ENCODE measurements at regions of chr19 and their contacts with region 1.

Region 1: GRCh38 chr19:47778089-47778953 is at the start of gene SELENOW:
- DNase-seq: peak; percentile 80 to 88 (median 87)
- H3K4me3 ChIP-seq: peak within 1 kb of the TSS; percentile 94
- H3K27ac ChIP-seq: peak within 1 kb of the TSS; percentile 88 to 98
- H3K4me1 ChIP-seq: peaks cover 13% of the 10 kb centered on the region
- H3K27me3 ChIP-seq: no peaks in the 10 kb centered on the region
- CTCF ChIP-seq: peak in 1 of 3 donors; percentile 37
- EP300 ChIP-seq: no peak
- POLR2A ChIP-seq: peak; percentile 92
- total RNA-seq, gene SELENOW: 169 to 412 (median 211) TPM

Region 2: GRCh38 chr19:47523473-47523872 is 254.8 kb before region 1 on chr19:
- intact Hi-C with region 1: loop called in 2 of 4 experiments (anchors 10 kb)
- DNase-seq: no peak
- H3K4me3 ChIP-seq: no peak overlapping the region
- H3K27ac ChIP-seq: no peak overlapping the region
- H3K4me1 ChIP-seq: peaks cover 3% of the 10 kb centered on the region
- H3K27me3 ChIP-seq: no peaks in the 10 kb centered on the region
- CTCF ChIP-seq: no peak
- EP300 ChIP-seq: no peak
- POLR2A ChIP-seq: no peak

Region 3: GRCh38 chr19:47713046-47714021 is 65.0 kb before region 1 on chr19 and contains the start of gene EHD2:
- intact Hi-C with region 1: loop called in 2 of 4 experiments (anchors 5 to 10 kb)
- DNase-seq: peak; percentile 85 to 91 (median 90)
- H3K4me3 ChIP-seq: peak within 1 kb of the TSS; percentile 92
- H3K27ac ChIP-seq: peak within 1 kb of the TSS; percentile 73 to 88
- H3K4me1 ChIP-seq: peaks cover 25% of the 10 kb centered on the region
- H3K27me3 ChIP-seq: no peaks in the 10 kb centered on the region
- CTCF ChIP-seq: peak; percentile 98 to 99 (median 98)
- EP300 ChIP-seq: no peak
- POLR2A ChIP-seq: peak; percentile 78
- total RNA-seq, gene EHD2: 28.0 to 162 (median 129) TPM

Region 4: GRCh38 chr19:47719047-47719859 is 59.1 kb before region 1 on chr19:
- intact Hi-C with region 1: loop called in 2 of 4 experiments (anchors 5 to 10 kb)
- DNase-seq: peak; percentile 95 to 97 (median 96)
- H3K4me3 ChIP-seq: peak overlapping the region; percentile 26
- H3K27ac ChIP-seq: peak overlapping the region; percentile 72 to 94
- H3K4me1 ChIP-seq: peaks cover 36% of the 10 kb centered on the region
- H3K27me3 ChIP-seq: no peaks in the 10 kb centered on the region
- CTCF ChIP-seq: no peak
- EP300 ChIP-seq: no peak
- POLR2A ChIP-seq: peak; percentile 11

Region 5: DNA sequence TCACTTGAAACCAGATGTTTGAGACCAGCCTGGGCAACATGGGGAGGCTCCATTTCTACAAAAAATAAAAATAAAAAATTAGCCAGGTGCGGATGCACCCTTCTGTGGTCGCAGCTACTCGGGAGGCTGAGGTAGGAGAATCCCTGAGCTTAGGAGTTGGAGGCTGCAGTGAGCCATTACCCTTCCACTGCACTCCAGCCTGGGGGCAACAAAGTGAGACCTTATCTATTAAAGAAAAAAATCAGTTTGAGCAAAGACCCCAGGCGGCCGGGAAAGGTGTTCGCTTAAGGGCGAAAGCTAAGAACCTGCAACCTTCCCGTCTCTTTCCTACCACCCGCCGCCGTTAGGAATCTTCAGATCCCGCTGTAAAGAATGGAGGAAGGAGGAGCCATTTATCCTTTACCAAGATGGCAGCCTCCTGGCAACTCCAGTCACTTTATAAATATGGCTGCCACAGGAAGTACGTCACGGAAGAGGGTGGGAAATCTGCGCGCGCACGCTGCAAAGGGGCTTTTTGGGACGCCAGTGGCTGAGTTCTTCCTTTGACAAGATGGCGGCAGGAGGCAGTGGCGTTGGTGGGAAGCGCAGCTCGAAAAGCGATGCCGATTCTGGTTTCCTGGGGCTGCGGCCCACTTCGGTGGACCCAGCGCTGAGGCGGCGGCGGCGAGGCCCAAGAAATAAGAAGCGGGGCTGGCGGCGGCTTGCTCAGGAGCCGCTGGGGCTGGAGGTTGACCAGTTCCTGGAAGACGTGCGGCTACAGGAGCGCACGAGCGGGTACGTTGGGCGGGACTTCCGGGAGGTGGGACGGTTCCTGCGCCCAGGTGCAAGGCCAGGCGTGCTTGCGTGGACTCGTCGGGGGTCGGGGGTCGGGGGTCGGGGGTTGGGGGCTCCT is 33.1 kb before region 1 on chr19 and contains the start of gene NOP53:
- intact Hi-C with region 1: loop called in 1 of 4 experiments (anchors 2 kb)
- DNase-seq: peak; percentile 96 to 99 (median 98)
- H3K4me3 ChIP-seq: peak within 1 kb of the TSS; percentile 96
- H3K27ac ChIP-seq: peak within 1 kb of the TSS; percentile 78 to 97
- H3K4me1 ChIP-seq: peaks cover 9% of the 10 kb centered on the region
- H3K27me3 ChIP-seq: no peaks in the 10 kb centered on the region
- CTCF ChIP-seq: peak in 2 of 3 donors; percentile 26 to 41
- EP300 ChIP-seq: no peak
- POLR2A ChIP-seq: peak; percentile 68
- total RNA-seq, gene NOP53: 645 to 985 (median 727) TPM